Panc1 (cell line): ENCODE measurements at regions of chr11 and their contacts with region 1.

Region 1: GRCh38 chr11:70467201-70468085 is 69.1 kb downstream of the CTTN start:
- DNase-seq: peak; percentile 35
- ATAC-seq: peak; percentile 73
- H3K4me3 ChIP-seq: no peak overlapping the region
- H3K27ac ChIP-seq: no peak overlapping the region; the same call in 1 of the 2 replicates
- H3K4me1 ChIP-seq: peaks cover 5% of the 10 kb centered on the region
- H3K27me3 ChIP-seq: no peaks in the 10 kb centered on the region
- CTCF ChIP-seq: peak; percentile 97

Region 2: DNA sequence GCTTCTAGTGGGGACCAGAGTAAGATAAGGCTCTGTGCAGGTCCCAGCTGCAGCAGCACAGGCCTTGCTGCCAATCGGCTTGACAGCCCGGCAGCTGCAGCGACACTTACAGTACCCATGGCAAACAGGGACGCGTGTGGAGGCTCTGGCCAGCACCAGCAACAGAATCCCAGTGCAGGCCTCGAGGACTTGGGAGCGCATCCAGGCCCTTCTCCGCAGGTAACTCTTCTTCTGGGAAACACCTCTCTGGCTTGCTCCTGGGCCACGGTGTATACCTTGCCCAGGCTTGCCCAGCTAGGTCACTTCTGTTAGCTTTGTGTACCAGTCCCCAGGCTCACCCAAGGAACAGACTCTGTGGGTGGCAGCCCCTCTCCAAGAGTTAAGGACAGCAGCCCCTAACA is 57.6 kb after region 1 on chr11:
- CTCF ChIA-PET with region 1: no interaction called
- POLR2A ChIA-PET with region 1: no interaction called
- in situ Hi-C with region 1: no loop called
- intact Hi-C with region 1: loop called (anchors 5 kb)
- DNase-seq: no peak
- ATAC-seq: no peak
- H3K4me3 ChIP-seq: no peak overlapping the region
- H3K27ac ChIP-seq: no peak overlapping the region
- H3K4me1 ChIP-seq: no peaks in the 10 kb centered on the region; the same call in 1 of the 2 replicates
- H3K27me3 ChIP-seq: no peaks in the 10 kb centered on the region
- CTCF ChIP-seq: no peak

Region 3: GRCh38 chr11:70755410-70756161 is 288.1 kb after region 1 on chr11:
- CTCF ChIA-PET with region 1: interaction called, 3 read pairs
- POLR2A ChIA-PET with region 1: no interaction called
- in situ Hi-C with region 1: no loop called
- intact Hi-C with region 1: loop called (anchors 1 kb)
- DNase-seq: peak; percentile 18
- ATAC-seq: peak; percentile 99
- H3K4me3 ChIP-seq: no peak overlapping the region
- H3K27ac ChIP-seq: no peak overlapping the region
- H3K4me1 ChIP-seq: no peaks in the 10 kb centered on the region
- H3K27me3 ChIP-seq: no peaks in the 10 kb centered on the region
- CTCF ChIP-seq: peak; percentile 99